Lower lobe of right lung (tissue), 2 donors: ENCODE measurements at regions of chr17 and their contacts with region 1.

Region 1: DNA sequence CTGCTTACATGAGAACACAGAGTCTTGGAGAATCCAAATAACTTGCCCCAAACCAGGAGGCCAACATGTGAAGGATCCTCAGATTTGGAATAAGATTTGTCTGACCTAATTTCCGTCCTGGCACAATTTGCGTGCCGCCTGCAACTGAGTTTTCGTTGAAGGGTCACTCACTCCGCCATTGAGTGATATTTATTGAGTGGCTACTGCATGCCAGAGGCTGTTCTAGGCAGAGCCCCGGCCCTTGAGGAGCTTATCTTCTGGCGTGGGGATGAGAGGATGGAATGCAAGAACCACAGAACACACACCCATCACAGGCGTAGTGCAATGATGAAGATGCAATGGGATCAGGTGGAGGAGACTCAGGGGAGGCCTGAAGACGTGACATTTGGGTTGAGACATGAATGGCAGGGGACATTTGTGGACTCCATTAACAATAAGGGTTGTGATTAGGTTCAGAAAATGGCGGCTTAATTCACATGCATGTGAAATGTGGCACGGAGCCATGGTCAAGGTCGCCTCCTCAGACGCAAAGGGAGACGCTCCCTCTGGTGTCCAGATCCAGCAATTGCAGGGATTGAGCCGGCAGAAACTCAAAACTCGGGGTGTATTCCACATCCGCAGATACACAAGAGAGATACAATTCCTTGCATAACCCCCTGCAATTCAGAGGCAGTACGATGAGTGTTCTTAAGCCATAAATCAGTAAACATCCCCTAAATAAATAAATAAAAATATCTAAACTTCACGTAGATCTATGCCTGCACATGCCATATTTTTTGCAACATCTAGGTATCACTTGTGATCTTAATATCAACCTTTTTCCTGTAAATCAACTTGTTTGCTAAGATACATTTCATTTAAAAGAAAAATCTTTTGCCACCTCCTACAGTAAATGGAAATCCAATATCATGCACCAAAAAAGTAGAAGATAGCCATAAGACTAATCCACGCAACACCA is 57.9 kb upstream of the CACNG4 start:
- DNase-seq: peak; percentile 88
- ATAC-seq: peak; percentile 52 to 69
- H3K4me3 ChIP-seq: no peak overlapping the region
- H3K27ac ChIP-seq: no peak overlapping the region
- H3K4me1 ChIP-seq: peaks cover 12% of the 10 kb centered on the region
- H3K27me3 ChIP-seq: no peaks in the 10 kb centered on the region
- CTCF ChIP-seq: peak; percentile 86

Region 2: GRCh38 chr17:66655861-66656260 is 250.7 kb before region 1 on chr17:
- intact Hi-C with region 1: no loop called
- DNase-seq: no peak
- ATAC-seq: no peak
- H3K4me3 ChIP-seq: no peak overlapping the region
- H3K27ac ChIP-seq: no peak overlapping the region
- H3K4me1 ChIP-seq: no peaks in the 10 kb centered on the region
- H3K27me3 ChIP-seq: no peaks in the 10 kb centered on the region
- CTCF ChIP-seq: no peak

Region 3: GRCh38 chr17:66715745-66716156 is 190.8 kb before region 1 on chr17:
- intact Hi-C with region 1: loop called (anchors 10 kb)
- DNase-seq: no peak
- ATAC-seq: peak; percentile 47 to 59
- H3K4me3 ChIP-seq: no peak overlapping the region
- H3K27ac ChIP-seq: no peak overlapping the region
- H3K4me1 ChIP-seq: peaks cover 3% of the 10 kb centered on the region
- H3K27me3 ChIP-seq: no peaks in the 10 kb centered on the region
- CTCF ChIP-seq: peak; percentile 63